AG04450 (cell line): ENCODE measurements at regions of chr2 and their contacts with region 1.

Region 1: GRCh38 chr2:127526149-127527000 is at the start of gene IWS1:
- DNase-seq: peak; percentile 90
- H3K4me3 ChIP-seq: peak within 1 kb of the TSS; percentile 89
- H3K27ac ChIP-seq: peak within 1 kb of the TSS; percentile 94
- H3K27me3 ChIP-seq: no peaks in the 10 kb centered on the region
- CTCF ChIP-seq: peak; percentile 22; the same call in 1 of the 2 replicates
- polyA plus RNA-seq, gene IWS1: 42.2 and 55.0 TPM in 2 replicates

Region 2: DNA sequence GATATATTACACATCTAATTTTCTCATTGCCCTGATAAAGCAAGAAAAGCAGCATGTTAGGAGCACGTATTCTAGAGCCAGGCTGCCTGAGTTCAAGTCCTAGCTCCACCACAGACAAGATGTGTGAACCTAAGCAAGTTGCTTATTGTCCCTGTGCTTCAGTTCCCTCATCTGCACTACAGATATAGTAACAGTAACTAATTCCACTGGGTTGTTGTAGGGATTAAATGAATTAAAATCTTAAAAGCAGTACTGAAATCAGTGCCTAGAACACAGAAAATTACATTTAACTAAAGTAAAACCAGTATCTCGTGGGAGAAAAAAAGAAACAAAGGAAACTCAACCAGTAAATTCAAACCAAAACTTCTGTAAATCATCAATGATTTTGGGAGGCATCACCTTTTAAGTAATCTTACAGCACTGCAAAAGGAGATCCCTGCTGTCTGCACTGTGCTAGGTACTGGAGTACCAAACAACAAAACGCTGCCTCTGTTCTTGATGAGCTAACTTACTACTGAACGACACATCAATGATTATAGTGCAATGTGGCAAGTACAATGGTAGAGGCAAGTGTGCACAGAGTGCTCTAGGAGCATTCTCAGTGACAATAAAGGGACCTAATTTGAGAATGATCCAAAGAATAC is 146.5 kb before region 1 on chr2:
- CTCF ChIA-PET with region 1: no interaction called
- POLR2A ChIA-PET with region 1: no interaction called
- DNase-seq: no peak
- H3K4me3 ChIP-seq: no peak overlapping the region
- H3K27ac ChIP-seq: no peak overlapping the region
- H3K27me3 ChIP-seq: no peaks in the 10 kb centered on the region
- CTCF ChIP-seq: no peak

Region 3: GRCh38 chr2:127508631-127509034 is 17.7 kb before region 1 on chr2:
- CTCF ChIA-PET with region 1: interaction called, 5 read pairs
- POLR2A ChIA-PET with region 1: interaction called, 26 read pairs
- DNase-seq: peak; percentile 88
- H3K4me3 ChIP-seq: no peak overlapping the region
- H3K27ac ChIP-seq: peak overlapping the region; percentile 80
- H3K27me3 ChIP-seq: no peaks in the 10 kb centered on the region
- CTCF ChIP-seq: no peak

Region 4: DNA sequence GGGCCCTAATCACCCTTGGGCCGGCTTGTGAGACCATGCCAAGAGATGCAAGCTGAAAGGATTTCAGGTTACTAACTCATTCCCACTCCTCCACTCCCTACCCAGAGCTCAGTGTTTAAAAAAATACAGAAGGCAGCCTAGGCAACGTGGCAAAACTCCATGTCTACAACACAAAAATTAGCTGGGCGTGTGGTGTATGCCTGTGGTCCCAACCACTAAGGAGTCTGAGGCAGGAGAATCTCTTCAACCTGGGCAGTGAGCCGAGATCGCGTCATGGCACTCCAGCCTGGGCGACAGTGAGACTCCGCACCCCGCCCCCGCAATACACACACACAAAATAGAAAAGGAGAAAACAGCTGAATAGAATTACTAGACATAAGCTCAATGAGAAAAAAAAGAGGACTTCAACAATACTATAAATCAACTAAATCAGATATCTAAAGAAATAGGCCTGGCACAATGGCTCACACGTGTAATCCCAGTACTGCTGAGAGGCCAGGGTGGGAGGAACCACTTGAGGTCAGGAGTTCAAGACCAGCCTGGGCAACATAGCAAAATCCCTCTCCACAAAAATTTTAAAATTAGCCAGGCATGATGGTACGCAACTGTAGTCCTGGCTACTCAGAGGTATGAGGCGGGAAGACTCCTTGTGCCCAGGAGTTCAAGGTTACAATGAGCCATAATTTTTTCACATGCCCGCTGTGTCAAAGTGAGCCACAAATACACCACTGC is 10.2 kb before region 1 on chr2:
- CTCF ChIA-PET with region 1: interaction called, 4 read pairs
- POLR2A ChIA-PET with region 1: interaction called, 12 read pairs
- DNase-seq: no peak
- H3K4me3 ChIP-seq: no peak overlapping the region
- H3K27ac ChIP-seq: no peak overlapping the region
- H3K27me3 ChIP-seq: no peaks in the 10 kb centered on the region
- CTCF ChIP-seq: no peak

Region 5: DNA sequence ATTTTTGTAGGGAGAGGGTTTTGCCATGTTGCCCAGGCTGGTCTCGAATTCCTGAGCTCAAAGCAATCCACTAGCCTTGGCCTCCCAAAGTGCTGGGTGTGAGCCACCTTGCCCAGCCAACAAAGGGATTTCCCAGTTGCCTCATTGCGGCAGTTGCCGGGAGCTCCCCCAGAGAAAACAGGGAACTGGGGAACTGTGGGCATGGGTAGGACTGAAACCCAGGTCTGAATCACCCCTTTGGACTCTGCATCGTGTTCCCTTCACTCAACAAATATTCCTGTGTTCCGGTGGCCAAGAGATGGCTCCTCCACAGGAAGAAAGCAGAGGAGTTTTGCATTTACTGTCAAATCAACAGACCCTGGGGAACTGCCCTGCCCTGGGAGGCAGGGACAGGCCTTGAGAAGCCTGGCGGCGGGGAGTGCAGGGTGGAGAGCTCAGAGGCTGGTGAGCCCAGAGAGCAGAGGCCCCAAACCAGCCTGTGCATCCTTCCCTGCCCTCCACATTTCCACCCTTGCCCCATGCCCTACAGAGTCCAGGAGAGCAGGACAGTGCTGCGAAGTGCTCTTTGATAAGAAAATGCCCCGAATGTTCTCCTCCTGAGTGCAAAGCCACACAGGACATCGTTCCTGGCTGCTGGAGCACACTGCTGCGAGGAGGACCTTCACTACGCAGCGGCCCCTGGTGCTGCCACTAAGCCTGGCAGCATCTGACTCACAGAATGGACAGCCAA is 34.0 kb after region 1 on chr2:
- CTCF ChIA-PET with region 1: no interaction called
- POLR2A ChIA-PET with region 1: no interaction called
- DNase-seq: no peak
- H3K4me3 ChIP-seq: no peak overlapping the region
- H3K27ac ChIP-seq: no peak overlapping the region
- H3K27me3 ChIP-seq: peaks cover 14% of the 10 kb centered on the region
- CTCF ChIP-seq: no peak